ENCODE measurements at regions of chr22 and their contacts with region 1.

Region 1: GRCh38 chr22:43385770-43386641 is 25.8 kb upstream of the MPPED1 start:
- DNase-seq: peak; percentile 58
- H3K4me3 Mint-ChIP-seq: no peak overlapping the region
- H3K27ac Mint-ChIP-seq: no peak overlapping the region
- H3K4me1 Mint-ChIP-seq: no peaks in the 10 kb centered on the region
- H3K27me3 Mint-ChIP-seq: peaks cover 25% of the 10 kb centered on the region

Region 2: GRCh38 chr22:43230971-43231723 is 154.9 kb before region 1 on chr22:
- intact Hi-C with region 1: loop called (anchors 1 kb)
- DNase-seq: peak; percentile 61
- H3K4me3 Mint-ChIP-seq: no peak overlapping the region
- H3K27ac Mint-ChIP-seq: no peak overlapping the region
- H3K4me1 Mint-ChIP-seq: peaks cover 6% of the 10 kb centered on the region
- H3K27me3 Mint-ChIP-seq: peaks cover 6% of the 10 kb centered on the region

Region 3: GRCh38 chr22:43273902-43274484 is 112.0 kb before region 1 on chr22:
- intact Hi-C with region 1: loop called (anchors 1 kb)
- DNase-seq: peak; percentile 21
- H3K4me3 Mint-ChIP-seq: no peak overlapping the region
- H3K27ac Mint-ChIP-seq: no peak overlapping the region
- H3K4me1 Mint-ChIP-seq: peaks cover 11% of the 10 kb centered on the region
- H3K27me3 Mint-ChIP-seq: peaks cover 2% of the 10 kb centered on the region

Region 4: GRCh38 chr22:43467216-43467940 is 81.4 kb after region 1 on chr22:
- intact Hi-C with region 1: no loop called
- DNase-seq: no peak
- H3K4me3 Mint-ChIP-seq: no peak overlapping the region
- H3K27ac Mint-ChIP-seq: no peak overlapping the region
- H3K4me1 Mint-ChIP-seq: no peaks in the 10 kb centered on the region
- H3K27me3 Mint-ChIP-seq: no peaks in the 10 kb centered on the region

Region 5: GRCh38 chr22:43884600-43885325 is 498.8 kb after region 1 on chr22:
- intact Hi-C with region 1: loop called (anchors 10 kb)
- DNase-seq: peak; percentile 10
- H3K4me3 Mint-ChIP-seq: no peak overlapping the region
- H3K27ac Mint-ChIP-seq: no peak overlapping the region
- H3K4me1 Mint-ChIP-seq: no peaks in the 10 kb centered on the region
- H3K27me3 Mint-ChIP-seq: peaks cover 6% of the 10 kb centered on the region

Region 6: GRCh38 chr22:44625981-44626687 is 1240.1 kb after region 1 on chr22:
- intact Hi-C with region 1: loop called (anchors 1 kb)
- DNase-seq: peak; percentile 70
- H3K4me3 Mint-ChIP-seq: no peak overlapping the region
- H3K27ac Mint-ChIP-seq: no peak overlapping the region
- H3K4me1 Mint-ChIP-seq: no peaks in the 10 kb centered on the region
- H3K27me3 Mint-ChIP-seq: peaks cover 7% of the 10 kb centered on the region